Activated CD8-positive, alpha-beta memory T cell treated with anti-CD3 and anti-CD28 coated beads, Interleukin-2, amount 10 ng/mL, durations not matched to agents 7 days and 5 days (primary cell): ENCODE measurements at regions of chr12 and their contacts with region 1.

Region 1: GRCh38 chr12:100672075-100672592 is 98.7 kb downstream of the GAS2L3 start:
- DNase-seq: peak; percentile 57
- ATAC-seq: peak; percentile 61
- H3K4me3 Mint-ChIP-seq: no peak overlapping the region
- H3K27ac Mint-ChIP-seq: no peak overlapping the region
- H3K4me1 Mint-ChIP-seq: no peaks in the 10 kb centered on the region
- H3K27me3 Mint-ChIP-seq: peaks cover 3% of the 10 kb centered on the region

Region 2: GRCh38 chr12:100661300-100661951 is 10.7 kb before region 1 on chr12:
- CTCF ChIA-PET with region 1: interaction called, 10 read pairs
- DNase-seq: no peak
- ATAC-seq: no peak
- H3K4me3 Mint-ChIP-seq: no peak overlapping the region
- H3K27ac Mint-ChIP-seq: no peak overlapping the region
- H3K4me1 Mint-ChIP-seq: no peaks in the 10 kb centered on the region
- H3K27me3 Mint-ChIP-seq: no peaks in the 10 kb centered on the region

Region 3: DNA sequence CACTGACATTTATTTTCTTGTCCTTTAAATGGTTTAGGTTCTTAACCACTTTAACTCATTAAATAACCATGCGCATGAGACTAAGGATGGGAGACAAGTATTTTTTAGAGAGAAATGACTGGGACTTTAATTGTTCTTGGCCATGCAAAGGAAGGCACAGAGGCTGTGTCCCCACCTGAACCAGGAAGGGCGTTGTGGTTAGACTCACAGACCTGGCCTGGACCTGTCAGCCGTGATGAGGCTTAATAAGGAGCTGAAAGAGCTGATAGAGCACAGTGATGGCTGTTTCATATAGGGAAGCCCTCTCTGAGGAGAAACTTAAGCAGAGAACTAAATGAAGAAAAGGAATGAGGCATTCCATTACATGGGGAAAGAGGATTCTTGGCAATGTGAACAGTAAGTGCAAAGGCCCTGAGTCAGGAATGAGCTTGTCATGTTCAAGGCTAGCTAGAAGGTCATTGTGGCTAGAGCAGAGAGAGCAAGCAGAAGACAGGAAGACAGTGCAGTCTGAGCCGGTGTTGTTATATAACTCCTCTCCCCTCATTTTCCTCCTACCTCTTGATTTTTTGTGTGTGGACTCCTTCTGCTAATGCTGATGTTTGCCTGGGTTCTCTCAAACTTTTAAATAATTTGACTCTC is 48.0 kb after region 1 on chr12:
- CTCF ChIA-PET with region 1: no interaction called
- DNase-seq: no peak
- ATAC-seq: no peak
- H3K4me3 Mint-ChIP-seq: no peak overlapping the region
- H3K27ac Mint-ChIP-seq: no peak overlapping the region
- H3K4me1 Mint-ChIP-seq: no peaks in the 10 kb centered on the region
- H3K27me3 Mint-ChIP-seq: peaks cover 47% of the 10 kb centered on the region